OCI-LY7 (cell line): ENCODE measurements at regions of chr19 and their contacts with region 1.

Region 1: DNA sequence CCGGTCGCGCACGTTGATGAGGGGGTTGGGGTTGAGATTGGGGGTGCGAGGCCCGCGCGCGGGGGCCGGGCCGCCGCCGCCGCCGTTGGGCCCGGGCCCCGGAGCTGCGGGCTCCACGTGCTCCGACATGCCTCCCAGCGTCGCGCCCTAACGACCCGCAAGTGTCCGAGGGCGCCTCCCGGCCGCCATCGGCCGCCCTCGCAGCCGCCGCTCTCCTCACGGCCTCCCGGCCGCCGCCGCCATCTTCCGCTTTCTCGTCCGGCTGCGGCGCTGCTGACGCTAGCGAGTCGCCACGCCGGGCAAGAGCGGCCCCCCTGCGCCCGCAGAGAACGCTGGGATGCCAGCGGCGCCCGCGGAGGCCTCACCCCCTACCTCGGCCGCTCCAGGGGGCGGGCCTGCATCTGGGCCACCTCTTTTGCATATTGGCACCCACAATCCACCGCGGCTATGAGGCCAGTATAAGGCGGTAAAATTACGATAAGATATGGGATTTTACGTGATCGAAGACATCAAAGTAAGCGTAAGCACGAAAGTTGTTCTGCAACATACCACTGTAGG is at the start of gene TMEM259:
- DNase-seq: peak; percentile 98
- H3K4me3 ChIP-seq: peak within 1 kb of the TSS; percentile 96
- H3K27ac ChIP-seq: peak within 1 kb of the TSS; percentile 76
- H3K4me1 ChIP-seq: peaks cover 59% of the 10 kb centered on the region
- CTCF ChIP-seq: no peak
- total RNA-seq, gene TMEM259: 131 and 169 TPM in 2 replicates

Region 2: GRCh38 chr19:977058-977692 is 43.8 kb before region 1 on chr19:
- CTCF ChIA-PET with region 1: no interaction called
- POLR2A ChIA-PET with region 1: no interaction called
- intact Hi-C with region 1: no loop called
- DNase-seq: no peak
- H3K4me3 ChIP-seq: no peak overlapping the region
- H3K27ac ChIP-seq: no peak overlapping the region
- H3K4me1 ChIP-seq: no peaks in the 10 kb centered on the region
- CTCF ChIP-seq: no peak

Region 3: GRCh38 chr19:1039646-1040475 is 18.9 kb after region 1 on chr19 and contains the start of gene ABCA7:
- CTCF ChIA-PET with region 1: no interaction called
- POLR2A ChIA-PET with region 1: interaction called, 15 read pairs
- intact Hi-C with region 1: loop called (anchors 2 kb)
- DNase-seq: peak; percentile 99
- H3K4me3 ChIP-seq: peak within 1 kb of the TSS; percentile 85
- H3K27ac ChIP-seq: peak within 1 kb of the TSS; percentile 97
- H3K4me1 ChIP-seq: peaks cover 49% of the 10 kb centered on the region
- CTCF ChIP-seq: peak; percentile 27; the same call in 1 of the 2 replicates
- total RNA-seq, gene ABCA7: 22.5 and 43.3 TPM in 2 replicates

Region 4: DNA sequence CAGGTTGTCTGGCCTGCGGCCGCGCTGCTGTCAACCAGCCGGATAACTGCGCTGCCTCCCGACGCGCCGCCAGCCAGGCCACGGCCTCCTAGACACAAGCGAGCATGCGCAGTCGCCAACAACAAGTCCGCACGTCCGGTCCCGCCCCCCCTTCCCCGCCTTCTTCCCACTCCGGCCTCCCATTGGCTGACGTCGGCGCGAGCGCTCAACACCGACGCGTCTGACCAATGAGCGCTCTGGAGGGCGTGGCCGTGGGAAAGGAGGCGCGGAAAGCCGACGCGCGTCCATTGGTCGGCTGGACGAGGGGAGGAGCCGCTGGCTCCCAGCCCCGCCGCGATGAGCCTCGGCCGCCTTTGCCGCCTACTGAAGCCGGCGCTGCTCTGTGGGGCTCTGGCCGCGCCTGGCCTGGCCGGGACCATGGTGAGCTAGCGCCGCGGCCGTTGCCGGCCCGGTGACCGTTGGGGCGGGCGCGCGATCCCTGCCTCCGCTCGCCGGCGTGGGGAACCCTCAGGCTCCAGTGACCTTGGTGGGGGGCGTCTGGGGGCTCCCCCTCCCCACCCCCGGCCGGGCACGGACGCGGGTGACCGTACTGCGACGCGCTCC is 82.9 kb after region 1 on chr19 and contains the start of gene GPX4:
- CTCF ChIA-PET with region 1: no interaction called
- POLR2A ChIA-PET with region 1: no interaction called
- intact Hi-C with region 1: loop called (anchors 5 kb)
- DNase-seq: peak; percentile 100
- H3K4me3 ChIP-seq: peak within 1 kb of the TSS; percentile 98
- H3K27ac ChIP-seq: peak within 1 kb of the TSS; percentile 80
- H3K4me1 ChIP-seq: peaks cover 48% of the 10 kb centered on the region
- CTCF ChIP-seq: no peak
- total RNA-seq, gene GPX4: 184 and 203 TPM in 2 replicates

Region 5: GRCh38 chr19:1269065-1269477 is 248.1 kb after region 1 on chr19 and contains the start of gene CIRBP:
- CTCF ChIA-PET with region 1: no interaction called
- POLR2A ChIA-PET with region 1: no interaction called
- intact Hi-C with region 1: loop called (anchors 10 kb)
- DNase-seq: peak; percentile 99
- H3K4me3 ChIP-seq: peak within 1 kb of the TSS; percentile 82
- H3K27ac ChIP-seq: peak within 1 kb of the TSS; percentile 69
- H3K4me1 ChIP-seq: peaks cover 85% of the 10 kb centered on the region
- CTCF ChIP-seq: no peak
- total RNA-seq, gene CIRBP: 278 and 287 TPM in 2 replicates

Region 6: DNA sequence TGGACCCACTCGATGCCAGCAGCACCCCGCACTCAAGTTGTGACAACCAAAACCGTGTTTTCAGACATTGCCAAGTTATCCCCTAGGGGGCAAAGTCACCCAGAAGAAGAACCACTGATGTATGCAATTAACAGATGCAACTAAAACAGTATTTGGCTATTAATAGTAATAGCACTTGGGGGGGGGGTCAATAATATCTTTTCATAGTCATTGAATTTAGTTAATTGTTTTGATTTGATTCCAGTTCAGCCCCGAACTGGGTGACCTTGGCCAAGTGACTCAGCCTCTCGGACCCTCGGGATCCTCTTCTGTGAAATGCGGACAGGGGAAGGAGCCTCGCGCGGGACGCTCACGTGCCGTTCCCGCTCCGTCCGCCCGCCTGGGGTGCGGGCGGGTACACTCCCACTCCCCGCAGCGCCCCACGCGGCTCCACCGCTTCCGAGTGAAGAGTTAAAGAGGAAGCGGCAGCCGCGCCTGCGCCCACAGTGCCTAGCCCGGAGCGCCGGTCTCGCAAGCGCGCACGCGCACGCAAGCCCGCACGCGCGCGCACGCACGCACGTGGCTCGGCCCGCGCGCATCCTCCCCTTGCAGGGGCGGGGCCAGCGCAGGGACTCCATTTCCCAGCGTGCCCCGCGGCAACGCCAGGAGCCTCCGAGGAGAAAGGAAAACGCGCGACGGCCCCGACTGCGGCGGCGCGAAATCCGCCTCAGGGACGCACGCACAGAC is 386.0 kb after region 1 on chr19:
- CTCF ChIA-PET with region 1: no interaction called
- POLR2A ChIA-PET with region 1: no interaction called
- intact Hi-C with region 1: loop called (anchors 5 kb)
- DNase-seq: peak; percentile 100
- H3K4me3 ChIP-seq: peak overlapping the region; percentile 71
- H3K27ac ChIP-seq: peak overlapping the region; percentile 78
- H3K4me1 ChIP-seq: peaks cover 21% of the 10 kb centered on the region
- CTCF ChIP-seq: peak; percentile 78